ENCODE measurements at regions of chr1 and their contacts with region 1.

Region 1: DNA sequence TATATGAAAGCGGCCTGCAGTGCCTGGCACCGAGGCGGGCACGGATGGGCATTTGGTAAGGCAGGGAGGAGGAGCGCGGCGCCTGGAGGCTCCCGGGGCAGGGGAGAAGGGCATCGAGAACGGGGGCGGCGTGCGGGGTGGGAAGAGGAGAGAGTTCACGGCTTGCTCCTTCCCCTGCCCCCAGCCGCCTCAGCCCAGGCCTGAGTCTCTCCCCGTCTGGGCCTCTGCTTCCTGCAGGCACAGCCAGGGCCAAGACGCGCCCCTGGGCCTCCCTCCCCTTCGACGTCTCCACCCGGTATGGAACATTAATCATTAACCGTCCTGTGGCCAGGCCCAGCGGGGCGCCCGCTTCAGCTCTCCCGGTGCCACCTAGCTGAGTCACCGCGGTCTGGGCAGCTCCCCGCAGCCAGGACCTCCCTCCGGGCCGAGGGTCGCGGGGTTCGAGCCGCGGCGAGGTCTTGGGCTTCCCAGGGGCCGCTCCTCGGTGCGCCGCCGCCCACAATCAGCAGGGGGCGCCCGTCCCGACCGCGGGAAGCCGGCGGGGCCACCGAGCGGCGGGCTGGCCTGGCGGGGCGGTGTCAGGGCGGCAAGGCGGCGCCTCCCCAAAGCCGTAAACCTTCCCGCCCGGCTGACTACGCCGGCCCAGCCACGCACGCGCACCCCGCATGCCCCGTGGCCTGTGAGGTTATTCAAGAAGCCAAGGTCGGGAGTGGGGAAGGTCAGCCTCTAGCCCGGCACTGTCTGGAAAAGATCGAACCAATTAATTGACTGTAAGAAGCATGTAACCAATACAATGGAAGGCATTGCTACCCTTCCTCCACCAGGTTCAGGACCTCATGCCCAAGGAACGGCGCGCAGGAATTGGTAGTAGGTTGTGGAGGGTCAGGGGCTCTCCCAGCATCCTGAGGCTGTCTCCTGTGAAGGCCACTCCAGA is 23.4 kb upstream of the RD3 start:
- DNase-seq: peak; percentile 94

Region 2: DNA sequence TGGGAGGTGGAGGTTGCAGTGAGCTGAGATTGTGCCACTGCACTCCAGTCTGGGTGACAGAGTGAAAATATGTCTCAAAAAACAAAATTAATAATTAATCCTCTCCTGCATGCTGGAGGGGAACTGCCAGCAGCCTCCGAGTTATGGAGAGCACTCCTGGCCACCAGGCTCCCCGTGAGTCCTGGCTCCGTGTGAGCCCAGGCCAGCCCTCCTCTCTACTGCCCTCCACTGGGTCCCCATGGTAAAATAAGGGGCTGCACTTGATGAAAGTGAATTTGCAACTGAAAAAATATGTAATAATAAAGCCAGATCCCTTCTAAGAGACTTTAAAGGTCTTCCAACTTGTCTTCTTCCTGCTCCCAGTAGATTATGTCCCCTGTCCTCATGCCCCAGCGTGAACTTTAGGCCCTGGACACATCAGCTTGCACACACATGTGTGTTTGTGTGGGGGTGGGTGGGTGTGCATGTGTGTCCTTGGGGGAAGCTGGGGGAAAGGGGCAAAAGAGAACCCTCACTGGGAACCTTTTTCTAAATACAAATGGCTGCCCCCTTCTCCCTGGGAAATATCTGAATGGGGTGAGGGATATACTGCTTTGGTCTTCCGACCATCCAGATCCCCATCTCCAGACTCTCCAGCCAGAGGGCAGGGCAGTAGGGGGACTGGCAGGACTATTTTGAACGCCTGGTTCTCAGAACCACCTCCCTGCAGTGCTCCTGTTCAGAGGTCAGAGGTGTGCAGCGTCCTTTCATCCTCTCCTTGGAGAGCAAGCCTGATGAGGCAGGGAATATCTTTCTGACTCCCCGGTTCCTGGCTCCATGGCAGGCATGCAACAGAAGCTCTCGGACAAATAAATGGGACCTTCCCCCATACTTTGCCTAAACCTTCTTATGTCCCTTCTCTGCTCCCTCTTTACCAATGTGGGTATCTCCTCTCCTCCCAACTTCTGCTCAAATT is 133.9 kb after region 1 on chr1:
- intact Hi-C with region 1: loop called (anchors 1 to 5 kb)
- DNase-seq: no peak

Region 3: DNA sequence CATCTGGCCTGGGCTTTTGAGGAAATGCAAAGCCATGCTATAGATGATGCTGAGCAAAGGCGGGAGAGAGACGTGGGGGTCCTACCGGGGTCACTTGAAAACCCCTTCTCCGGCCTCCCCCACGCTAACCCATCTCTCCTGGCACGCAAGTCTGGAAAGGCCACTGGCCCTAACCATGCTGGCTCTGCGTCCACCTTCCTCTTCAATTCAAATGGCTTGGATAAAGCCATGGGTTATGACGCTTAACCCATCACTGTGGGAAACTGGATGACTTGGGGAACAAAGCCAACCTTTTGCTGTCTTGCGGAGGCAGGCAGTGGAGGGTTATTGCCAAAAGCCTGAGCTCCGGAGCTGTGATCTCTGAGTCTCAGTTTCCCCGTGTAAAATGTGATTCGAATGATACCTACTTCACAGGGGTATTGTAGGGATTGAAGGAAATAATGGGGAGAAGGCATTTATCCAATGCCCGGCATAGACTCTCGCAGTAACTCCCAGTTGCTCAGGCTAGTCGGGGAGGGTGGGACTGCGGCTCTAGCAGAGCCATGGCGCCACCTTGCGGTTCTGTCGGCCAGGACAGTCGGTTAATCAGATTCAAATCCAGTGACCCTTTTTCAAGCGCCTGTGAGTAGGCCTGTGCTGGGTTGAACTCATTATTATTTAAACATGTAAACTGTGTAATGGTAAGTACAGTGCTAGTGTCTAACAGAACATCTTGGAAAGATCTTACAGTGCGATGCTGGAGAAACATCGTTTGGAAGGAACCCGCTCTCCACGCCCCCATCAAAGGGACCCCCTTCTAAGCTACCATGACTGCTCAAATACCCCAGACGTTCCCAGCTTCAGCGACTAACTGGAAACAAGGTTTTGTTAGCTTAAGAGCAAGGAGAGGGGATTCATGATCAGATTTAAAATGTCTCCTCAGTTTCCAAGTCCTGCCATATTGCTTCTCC is 139.8 kb after region 1 on chr1:
- intact Hi-C with region 1: loop called (anchors 1 to 5 kb)
- DNase-seq: peak; percentile 97

Region 4: DNA sequence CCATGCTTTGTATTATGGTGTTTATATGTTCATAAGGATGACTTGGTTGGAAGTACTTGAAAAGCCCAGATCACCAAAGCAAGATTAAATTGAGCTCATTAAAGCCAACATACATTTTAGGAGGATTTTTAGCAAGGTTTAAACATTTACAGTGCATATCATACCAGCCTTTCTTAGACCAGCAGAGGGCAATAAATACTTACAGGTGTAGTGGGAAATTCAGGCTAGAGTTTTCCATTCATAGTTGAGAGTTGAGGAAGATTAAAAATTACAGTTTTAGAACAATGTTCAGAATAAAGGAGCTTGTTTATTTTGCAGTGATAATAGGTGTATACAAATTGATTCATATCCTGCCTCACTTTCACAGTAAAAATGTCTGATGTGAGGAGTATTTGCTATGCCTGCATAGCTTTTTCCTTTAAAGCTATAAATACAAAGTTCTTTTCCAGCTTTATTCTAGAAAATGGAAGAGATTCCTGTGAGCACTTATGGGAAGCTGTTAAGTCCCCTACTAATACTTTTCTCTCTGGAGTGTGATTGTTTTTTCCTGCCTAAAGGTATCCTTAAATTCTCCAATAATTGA is 555.5 kb after region 1 on chr1:
- intact Hi-C with region 1: no loop called
- DNase-seq: no peak

Measured in posterior vena cava (tissue), 2 donors.